HAP-1 (cell line): ENCODE measurements at regions of chr3 and their contacts with region 1.

Region 1: GRCh38 chr3:39288300-39288808 is 8.5 kb upstream of the CX3CR1 start:
- DNase-seq: peak; percentile 79 to 88
- H3K4me3 ChIP-seq: no peak overlapping the region
- H3K4me1 ChIP-seq: no peaks in the 10 kb centered on the region
- H3K27me3 ChIP-seq: peaks cover 12% of the 10 kb centered on the region

Region 2: DNA sequence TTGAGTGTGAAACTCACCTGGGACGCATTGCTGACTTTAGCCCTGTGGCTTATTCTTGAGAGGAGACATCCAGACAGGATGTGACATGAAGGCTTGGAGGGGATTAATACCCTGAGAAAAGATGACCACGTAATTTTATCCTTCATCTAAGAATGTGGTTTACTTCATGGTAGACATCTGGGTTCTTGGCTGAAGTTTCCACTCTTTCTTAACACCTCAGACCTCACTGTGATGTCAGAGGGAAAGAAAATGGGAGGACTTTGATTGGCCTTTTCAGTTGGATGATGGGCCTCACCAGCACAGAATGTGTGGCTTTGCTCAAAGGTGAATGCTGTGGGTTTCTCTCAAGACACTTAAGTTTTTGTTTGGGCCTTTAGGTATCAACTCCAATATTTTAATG is 197.4 kb before region 1 on chr3:
- in situ Hi-C with region 1: no loop called
- DNase-seq: no peak
- H3K4me3 ChIP-seq: no peak overlapping the region
- H3K4me1 ChIP-seq: no peaks in the 10 kb centered on the region
- H3K27me3 ChIP-seq: no peaks in the 10 kb centered on the region

Region 3: GRCh38 chr3:39107388-39108199 is 180.8 kb before region 1 on chr3 and contains the starts of genes GORASP1 and TTC21A:
- in situ Hi-C with region 1: loop called (anchors 25 kb)
- DNase-seq: peak; percentile 84 to 86
- H3K4me3 ChIP-seq: peak within 1 kb of the TSS; percentile 88
- H3K4me1 ChIP-seq: peaks cover 5% of the 10 kb centered on the region; the same call in 1 of the 2 replicates
- H3K27me3 ChIP-seq: no peaks in the 10 kb centered on the region

Region 4: DNA sequence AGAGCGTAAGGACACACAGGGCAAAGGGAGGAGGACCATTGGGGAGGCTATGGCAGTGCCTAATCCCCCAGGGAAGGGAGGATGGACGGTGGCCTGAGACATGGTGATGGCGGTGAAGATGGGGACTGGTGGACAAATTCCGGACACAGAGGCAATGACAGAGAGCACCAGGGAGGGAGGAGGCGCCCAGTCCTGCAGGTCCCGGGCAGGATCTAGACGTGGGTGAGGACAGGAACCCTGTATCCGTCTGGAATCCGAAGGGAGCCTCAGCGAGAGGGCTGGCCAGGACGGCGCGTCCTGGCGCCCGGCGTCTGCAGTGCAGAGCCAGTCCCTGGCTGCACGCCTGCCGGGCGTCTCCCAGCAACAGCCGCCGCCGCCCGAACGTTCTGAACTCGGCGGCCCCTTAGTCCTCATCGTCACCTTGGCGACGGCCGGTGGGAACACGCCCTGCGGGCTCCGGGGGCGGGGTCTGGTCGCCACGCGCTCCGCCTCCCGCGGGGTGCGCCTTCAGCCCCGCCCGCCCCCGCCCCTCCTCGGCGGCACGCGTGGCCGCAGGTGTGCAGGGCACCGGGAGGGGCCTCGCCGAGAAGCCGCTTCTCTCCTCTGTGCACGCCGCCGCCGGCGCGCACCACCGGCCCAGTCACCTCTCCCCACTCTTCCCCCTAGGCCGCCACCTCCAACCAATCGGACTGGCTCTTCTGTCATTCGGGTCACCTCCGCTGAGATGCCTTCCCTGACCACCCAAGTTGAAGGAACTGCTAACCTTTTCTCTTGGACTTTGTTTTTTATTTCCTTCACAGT is 107.6 kb before region 1 on chr3:
- in situ Hi-C with region 1: loop called (anchors 10 kb)
- DNase-seq: peak; percentile 82 to 91
- H3K4me3 ChIP-seq: peak overlapping the region; percentile 27
- H3K4me1 ChIP-seq: peaks cover 15% of the 10 kb centered on the region
- H3K27me3 ChIP-seq: no peaks in the 10 kb centered on the region